PC-3 (cell line): ENCODE measurements at regions of chr2 and their contacts with region 1.

Region 1: GRCh38 chr2:134866549-134866981 is 28.1 kb downstream of the ACMSD start:
- DNase-seq: peak; percentile 83
- ATAC-seq: peak; percentile 95
- H3K4me3 ChIP-seq: no peak overlapping the region
- H3K27ac ChIP-seq: peak overlapping the region; percentile 51
- H3K4me1 ChIP-seq: peaks cover 17% of the 10 kb centered on the region
- H3K27me3 ChIP-seq: no peaks in the 10 kb centered on the region
- CTCF ChIP-seq: no peak

Region 2: DNA sequence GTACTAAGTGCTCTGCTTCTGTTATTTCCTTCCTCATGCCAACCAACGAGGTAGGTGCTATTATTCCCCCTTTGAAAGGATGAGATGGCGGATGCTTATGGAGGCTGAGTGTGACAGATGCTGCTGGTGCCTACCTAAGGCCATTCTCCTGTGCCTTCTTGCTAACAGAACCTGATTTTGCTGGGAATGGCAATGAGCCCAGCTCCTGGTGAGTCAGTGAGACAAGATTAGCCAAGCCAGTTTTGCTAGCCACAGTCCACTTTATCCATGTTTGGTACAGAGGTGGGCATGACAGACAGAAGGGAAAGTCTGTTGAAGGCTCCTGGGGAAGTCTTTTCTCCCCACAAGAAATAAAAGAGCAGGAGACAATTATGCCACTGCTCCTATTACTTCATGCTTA is 104.1 kb before region 1 on chr2:
- CTCF ChIA-PET with region 1: no interaction called
- POLR2A ChIA-PET with region 1: no interaction called
- intact Hi-C with region 1: no loop called
- DNase-seq: peak; percentile 80
- ATAC-seq: peak; percentile 78
- H3K4me3 ChIP-seq: no peak overlapping the region
- H3K27ac ChIP-seq: no peak overlapping the region
- H3K4me1 ChIP-seq: peaks cover 4% of the 10 kb centered on the region; the same call in 1 of the 2 replicates
- H3K27me3 ChIP-seq: no peaks in the 10 kb centered on the region
- CTCF ChIP-seq: no peak

Region 3: GRCh38 chr2:134819334-134819733 is 47.2 kb before region 1 on chr2:
- CTCF ChIA-PET with region 1: interaction called, 16 read pairs
- POLR2A ChIA-PET with region 1: no interaction called
- intact Hi-C with region 1: no loop called
- DNase-seq: peak; percentile 95
- ATAC-seq: peak; percentile 68
- H3K4me3 ChIP-seq: no peak overlapping the region
- H3K27ac ChIP-seq: peak overlapping the region; percentile 98
- H3K4me1 ChIP-seq: peaks cover 35% of the 10 kb centered on the region
- H3K27me3 ChIP-seq: no peaks in the 10 kb centered on the region
- CTCF ChIP-seq: no peak